ENCODE measurements at regions of chr11 and their contacts with region 1.

Region 1: GRCh38 chr11:116986521-116987105 is 111.6 kb downstream of the SIK3 start:
- DNase-seq: peak; percentile 78
- H3K4me3 Mint-ChIP-seq: peak overlapping the region; percentile 60
- H3K27ac Mint-ChIP-seq: peak overlapping the region; percentile 32
- H3K4me1 Mint-ChIP-seq: peaks cover 43% of the 10 kb centered on the region
- H3K27me3 Mint-ChIP-seq: no peaks in the 10 kb centered on the region
- CTCF ChIP-seq: no peak

Region 2: DNA sequence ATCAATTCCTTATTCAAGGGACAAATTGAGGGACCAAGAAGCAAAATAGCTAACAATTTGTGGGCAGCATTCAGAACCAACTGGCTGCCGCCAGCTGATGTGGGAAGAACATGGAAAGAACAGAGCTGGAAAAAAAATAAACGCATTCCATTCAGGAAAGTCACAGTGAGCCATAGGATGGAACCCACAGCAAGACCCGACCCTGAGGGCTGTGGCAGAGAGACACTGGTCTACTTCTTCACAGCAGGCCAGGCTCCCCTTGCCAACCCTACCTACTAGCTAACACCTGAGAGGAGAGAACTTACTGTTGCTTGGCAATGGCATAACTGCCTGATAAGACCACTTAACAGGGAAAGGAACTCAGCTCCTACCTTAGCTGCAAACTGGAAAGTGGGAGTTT is 25.7 kb before region 1 on chr11:
- CTCF ChIA-PET with region 1: interaction called, 3 read pairs
- POLR2A ChIA-PET with region 1: interaction called, 10 read pairs
- intact Hi-C with region 1: no loop called
- DNase-seq: peak; percentile 63
- H3K4me3 Mint-ChIP-seq: no peak overlapping the region
- H3K27ac Mint-ChIP-seq: peak overlapping the region; percentile 44
- H3K4me1 Mint-ChIP-seq: peaks cover 20% of the 10 kb centered on the region
- H3K27me3 Mint-ChIP-seq: no peaks in the 10 kb centered on the region
- CTCF ChIP-seq: no peak

Region 3: DNA sequence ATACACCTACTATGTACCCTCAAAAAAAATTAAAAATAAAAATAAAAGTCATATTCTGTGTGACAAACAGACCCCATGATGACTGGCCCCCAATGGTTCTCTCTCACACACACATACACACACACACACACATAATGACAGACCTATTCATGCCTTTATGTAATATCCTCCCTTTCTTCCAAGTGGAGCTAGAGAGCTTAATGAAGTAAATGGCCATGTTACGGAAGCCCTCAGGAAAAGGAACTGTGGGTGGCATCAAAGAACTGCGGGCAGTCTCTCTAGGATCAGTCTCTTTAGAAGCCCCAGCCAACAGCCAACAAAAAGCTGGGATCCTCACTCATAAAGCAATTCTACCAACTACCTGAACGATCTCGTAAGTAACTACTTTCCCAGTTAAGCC is 13.9 kb before region 1 on chr11:
- CTCF ChIA-PET with region 1: interaction called, 15 read pairs
- POLR2A ChIA-PET with region 1: interaction called, 8 read pairs
- intact Hi-C with region 1: no loop called
- DNase-seq: no peak
- H3K4me3 Mint-ChIP-seq: no peak overlapping the region
- H3K27ac Mint-ChIP-seq: no peak overlapping the region
- H3K4me1 Mint-ChIP-seq: peaks cover 8% of the 10 kb centered on the region
- H3K27me3 Mint-ChIP-seq: no peaks in the 10 kb centered on the region
- CTCF ChIP-seq: no peak

Region 4: DNA sequence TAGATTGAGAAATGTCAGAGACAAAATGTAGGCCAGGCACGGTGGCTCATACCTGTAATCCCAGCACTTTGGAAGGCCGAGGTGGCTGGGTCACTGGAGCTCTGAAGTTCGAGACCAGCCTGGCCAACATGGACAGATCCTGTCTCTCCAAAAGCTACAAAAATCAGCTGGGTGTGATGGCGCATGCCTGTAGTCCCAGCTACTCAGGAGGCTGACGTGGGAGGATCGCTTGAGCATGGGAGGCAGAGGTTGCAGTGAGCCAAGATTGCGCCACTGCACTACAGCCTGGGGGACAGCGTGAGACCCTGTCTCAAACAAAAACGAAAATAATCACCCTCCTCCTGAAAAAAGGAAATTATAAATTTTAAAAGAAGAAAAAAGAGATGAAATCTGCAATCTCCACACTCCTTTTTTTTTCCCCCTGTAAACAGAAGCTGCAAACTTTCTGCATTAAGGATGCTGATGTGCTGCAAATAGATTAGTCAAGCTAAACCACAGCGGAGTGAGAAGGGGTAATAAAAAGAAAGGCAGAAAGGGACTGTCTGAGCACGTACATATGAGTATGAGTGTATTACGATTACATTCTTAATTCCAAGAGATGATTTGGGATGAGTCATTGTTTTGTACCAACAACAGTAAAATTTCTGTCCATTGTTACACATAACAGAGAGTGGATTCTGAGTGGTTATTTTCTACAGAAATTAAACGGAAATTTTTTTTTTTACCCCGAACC is 24.4 kb after region 1 on chr11:
- CTCF ChIA-PET with region 1: no interaction called
- POLR2A ChIA-PET with region 1: interaction called, 13 read pairs
- intact Hi-C with region 1: loop called (anchors 2 kb)
- DNase-seq: peak; percentile 90
- H3K4me3 Mint-ChIP-seq: peak overlapping the region; percentile 50
- H3K27ac Mint-ChIP-seq: peak overlapping the region; percentile 62
- H3K4me1 Mint-ChIP-seq: peaks cover 24% of the 10 kb centered on the region
- H3K27me3 Mint-ChIP-seq: no peaks in the 10 kb centered on the region
- CTCF ChIP-seq: no peak

Measured in MCF 10A (cell line).